Activated naive CD4-positive, alpha-beta T cell treated with anti-CD3 and anti-CD28 coated beads for 36 hours (primary cell): ENCODE measurements at regions of chr5 and their contacts with region 1.

Region 1: GRCh38 chr5:50574121-50574520 is 92.3 kb upstream of the PARP8 start:
- DNase-seq: no peak
- H3K4me3 Mint-ChIP-seq: no peak overlapping the region
- H3K27ac Mint-ChIP-seq: no peak overlapping the region
- H3K4me1 Mint-ChIP-seq: peaks cover 9% of the 10 kb centered on the region
- H3K27me3 Mint-ChIP-seq: no peaks in the 10 kb centered on the region

Region 2: GRCh38 chr5:50595199-50595598 is 21.1 kb after region 1 on chr5:
- CTCF ChIA-PET with region 1: interaction called, 4 read pairs
- intact Hi-C with region 1: loop called (anchors 1 kb)
- DNase-seq: no peak
- H3K4me3 Mint-ChIP-seq: no peak overlapping the region
- H3K27ac Mint-ChIP-seq: peak overlapping the region; percentile 8
- H3K4me1 Mint-ChIP-seq: peaks cover 40% of the 10 kb centered on the region
- H3K27me3 Mint-ChIP-seq: no peaks in the 10 kb centered on the region